ENCODE measurements at regions of chr4 and their contacts with region 1.

Region 1: GRCh38 chr4:88104902-88105610 is 53.4 kb downstream of the ABCG2 start:
- DNase-seq: no peak
- ATAC-seq: no peak
- H3K4me3 ChIP-seq: no peak overlapping the region
- H3K27ac ChIP-seq: peak overlapping the region; percentile 18
- H3K4me1 ChIP-seq: peaks cover 56% of the 10 kb centered on the region
- H3K27me3 ChIP-seq: no peaks in the 10 kb centered on the region
- CTCF ChIP-seq: no peak
- EP300 ChIP-seq: no peak
- POLR2A ChIP-seq: no peak
- RAD21 ChIP-seq: no peak

Region 2: DNA sequence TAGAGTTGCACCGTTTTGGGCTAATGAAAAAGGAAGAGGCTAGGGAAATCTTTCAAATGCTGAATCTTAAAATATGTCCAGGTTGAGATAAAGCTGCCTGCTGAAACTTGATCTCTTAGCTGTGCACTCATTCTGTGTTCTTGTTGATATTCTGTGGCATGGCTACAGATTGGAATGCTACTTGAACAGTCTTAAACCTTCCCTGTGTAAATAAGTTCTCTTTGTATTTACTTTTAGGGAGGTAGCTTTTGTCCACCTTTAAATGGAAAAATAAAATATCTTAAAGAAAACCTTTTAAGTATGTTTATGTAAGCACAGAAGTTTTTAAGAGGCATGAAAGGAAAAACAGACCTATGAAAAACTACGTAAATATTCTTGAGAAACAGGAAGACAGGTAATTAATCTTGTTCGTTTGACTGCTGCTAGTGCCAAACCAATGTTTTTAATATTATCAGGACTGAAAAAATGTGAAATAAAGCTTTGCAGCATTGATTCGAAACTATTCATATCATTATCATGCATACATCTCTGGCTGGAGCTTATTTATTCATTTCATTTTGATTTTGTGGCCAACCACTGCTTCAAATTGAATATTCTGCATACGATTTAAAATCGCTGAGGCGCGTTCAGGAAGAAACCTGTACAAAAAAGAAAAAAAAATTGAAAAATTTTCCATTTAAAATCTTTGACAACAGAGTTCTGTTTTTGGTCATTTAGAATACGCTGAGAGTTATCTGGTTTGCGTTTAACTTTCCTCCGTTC is 800.2 kb before region 1 on chr4:
- CTCF ChIA-PET with region 1: no interaction called
- POLR2A ChIA-PET with region 1: no interaction called
- in situ Hi-C with region 1: no loop called
- intact Hi-C with region 1: no loop called
- DNase-seq: no peak
- ATAC-seq: no peak
- H3K4me3 ChIP-seq: no peak overlapping the region
- H3K27ac ChIP-seq: no peak overlapping the region
- H3K4me1 ChIP-seq: peaks cover 6% of the 10 kb centered on the region; the same call in 1 of the 2 replicates
- H3K27me3 ChIP-seq: peaks cover 0 to 4% of the 10 kb centered on the region in 2 experiments; a peak in 1 of 5 replicates
- CTCF ChIP-seq: no peak
- EP300 ChIP-seq: no peak
- POLR2A ChIP-seq: no peak
- RAD21 ChIP-seq: no peak

Region 3: GRCh38 chr4:87865960-87866598 is 239.0 kb before region 1 on chr4:
- CTCF ChIA-PET with region 1: no interaction called
- POLR2A ChIA-PET with region 1: no interaction called
- in situ Hi-C with region 1: no loop called
- intact Hi-C with region 1: loop called (anchors 5 kb)
- DNase-seq: peak; percentile 98
- ATAC-seq: peak; percentile 97
- H3K4me3 ChIP-seq: peak overlapping the region; percentile 9 to 30 (median 17); a peak in 4 of 6 replicates
- H3K27ac ChIP-seq: peak overlapping the region; percentile 90
- H3K4me1 ChIP-seq: peaks cover 88% of the 10 kb centered on the region
- H3K27me3 ChIP-seq: no peaks in the 10 kb centered on the region
- CTCF ChIP-seq: no peak
- EP300 ChIP-seq: peak; percentile 90 to 99; a peak in 3 of 4 replicates
- POLR2A ChIP-seq: no peak; a peak in 1 of 4 replicates
- RAD21 ChIP-seq: no peak

Region 4: GRCh38 chr4:88062843-88063242 is 42.2 kb before region 1 on chr4:
- CTCF ChIA-PET with region 1: no interaction called
- POLR2A ChIA-PET with region 1: interaction called, 3 read pairs
- in situ Hi-C with region 1: no loop called
- intact Hi-C with region 1: loop called (anchors 5 kb)
- DNase-seq: peak; percentile 25
- ATAC-seq: peak; percentile 69
- H3K4me3 ChIP-seq: no peak overlapping the region
- H3K27ac ChIP-seq: no peak overlapping the region
- H3K4me1 ChIP-seq: peaks cover 26% of the 10 kb centered on the region
- H3K27me3 ChIP-seq: no peaks in the 10 kb centered on the region
- CTCF ChIP-seq: no peak
- EP300 ChIP-seq: peak in 1 of 2 experiments; percentile 33; a peak in 1 of 4 replicates
- POLR2A ChIP-seq: no peak
- RAD21 ChIP-seq: no peak

Region 5: DNA sequence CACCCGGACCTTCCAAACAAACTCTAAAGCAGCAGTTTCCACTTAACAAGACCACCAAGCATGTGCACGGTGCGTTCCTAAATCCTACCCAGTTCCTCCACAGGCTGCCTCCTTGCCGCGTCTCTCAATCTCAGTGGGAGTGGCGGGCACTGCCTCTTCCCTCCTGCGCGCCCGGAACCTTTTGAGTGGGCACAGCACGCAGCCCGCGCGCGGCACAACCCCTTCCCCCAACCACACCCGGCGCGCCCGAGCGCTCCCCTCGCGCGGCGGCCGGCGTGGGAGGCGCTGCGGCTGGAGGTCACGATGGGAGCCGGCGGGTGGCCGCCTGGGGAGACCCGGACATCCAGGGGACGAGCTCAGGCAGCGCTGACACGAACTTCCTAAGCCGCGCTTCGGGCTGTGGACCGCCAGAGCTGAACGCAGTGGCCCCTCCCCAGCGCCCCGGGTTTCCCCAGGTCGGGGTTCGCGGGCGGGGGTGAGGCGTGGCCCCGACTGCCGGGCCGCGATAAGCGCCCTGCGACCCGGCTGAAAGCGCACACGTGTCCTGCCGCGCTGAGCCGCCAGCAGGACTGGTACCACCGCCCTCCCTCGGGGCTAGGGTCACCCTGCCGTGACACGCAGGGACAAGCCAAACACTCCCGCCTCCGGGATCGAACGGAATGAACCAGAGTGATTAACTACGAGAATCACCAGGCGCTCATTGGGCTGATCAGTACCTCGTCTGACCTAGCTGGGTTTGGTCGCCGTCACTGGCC is 53.6 kb after region 1 on chr4 and contains the start of gene ABCG2:
- CTCF ChIA-PET with region 1: no interaction called
- POLR2A ChIA-PET with region 1: interaction called, 9 read pairs
- in situ Hi-C with region 1: no loop called
- intact Hi-C with region 1: loop called (anchors 2 kb)
- DNase-seq: peak; percentile 44
- ATAC-seq: peak; percentile 88
- H3K4me3 ChIP-seq: peak within 1 kb of the TSS; percentile 49 to 82 (median 75)
- H3K27ac ChIP-seq: peak within 1 kb of the TSS; percentile 67
- H3K4me1 ChIP-seq: peaks cover 36% of the 10 kb centered on the region
- H3K27me3 ChIP-seq: no peaks in the 10 kb centered on the region
- CTCF ChIP-seq: no peak
- EP300 ChIP-seq: no peak
- POLR2A ChIP-seq: peak; percentile 42 to 45; a peak in 2 of 4 replicates
- RAD21 ChIP-seq: peak; percentile 14; the same call in 1 of the 2 replicates
- total RNA-seq, gene ABCG2: 13.2 and 15.7 TPM in 2 replicates

Region 6: DNA sequence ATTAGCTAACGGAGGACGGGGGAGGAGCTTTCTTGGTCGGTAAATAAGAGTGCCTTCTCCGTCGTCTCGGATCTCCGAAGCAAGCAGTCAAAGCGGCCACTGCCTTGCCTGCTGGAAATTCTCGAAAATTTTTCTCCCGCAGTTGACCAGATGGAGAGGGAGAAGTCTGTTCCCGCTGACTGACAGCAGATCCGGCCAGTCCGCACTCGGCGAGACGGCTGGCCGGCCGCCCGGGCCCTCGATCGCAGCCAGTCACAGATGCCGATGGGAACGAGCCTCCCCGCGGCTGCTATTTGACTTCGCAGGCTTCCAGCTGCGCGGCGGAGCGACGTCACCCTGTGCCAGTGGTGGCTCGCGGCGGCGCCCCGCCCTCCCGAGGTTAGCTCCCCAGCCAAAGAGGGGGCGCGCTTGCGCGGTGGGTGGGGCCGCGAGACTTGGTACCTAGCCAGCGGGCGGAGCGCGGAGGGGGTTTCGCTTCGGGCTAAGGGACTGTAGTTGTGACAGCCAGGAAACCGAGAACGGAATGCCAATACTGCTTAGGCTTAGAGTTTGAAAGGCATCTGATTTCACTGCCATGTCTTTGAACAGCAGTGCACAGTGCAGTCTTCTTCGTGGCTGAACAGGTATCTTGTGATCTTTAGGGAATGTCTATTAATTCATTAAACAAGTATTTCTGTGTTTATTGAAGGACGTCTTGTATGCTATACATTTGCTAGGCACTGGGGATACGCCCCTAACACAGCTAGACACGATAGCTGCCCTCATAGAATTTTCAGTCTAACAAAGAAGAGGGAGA is 179.6 kb after region 1 on chr4 and contains the start of gene PPM1K:
- CTCF ChIA-PET with region 1: no interaction called
- POLR2A ChIA-PET with region 1: interaction called, 3 read pairs
- in situ Hi-C with region 1: no loop called
- intact Hi-C with region 1: loop called (anchors 5 kb)
- DNase-seq: peak; percentile 95
- ATAC-seq: peak; percentile 95
- H3K4me3 ChIP-seq: peak within 1 kb of the TSS; percentile 74 to 81 (median 76)
- H3K27ac ChIP-seq: peak within 1 kb of the TSS; percentile 82
- H3K4me1 ChIP-seq: peaks cover 32% of the 10 kb centered on the region
- H3K27me3 ChIP-seq: no peaks in the 10 kb centered on the region
- CTCF ChIP-seq: peak; percentile 65
- EP300 ChIP-seq: peak in 1 of 2 experiments; percentile 22; a peak in 1 of 4 replicates
- POLR2A ChIP-seq: peak in 1 of 2 experiments; percentile 46; a peak in 2 of 4 replicates
- RAD21 ChIP-seq: no peak
- total RNA-seq, gene PPM1K: 17.8 and 23.3 TPM in 2 replicates

Measured in HepG2 (cell line).